Sigmoid colon (tissue), 7 donors: ENCODE measurements at regions of chr6 and their contacts with region 1.

Region 1: DNA sequence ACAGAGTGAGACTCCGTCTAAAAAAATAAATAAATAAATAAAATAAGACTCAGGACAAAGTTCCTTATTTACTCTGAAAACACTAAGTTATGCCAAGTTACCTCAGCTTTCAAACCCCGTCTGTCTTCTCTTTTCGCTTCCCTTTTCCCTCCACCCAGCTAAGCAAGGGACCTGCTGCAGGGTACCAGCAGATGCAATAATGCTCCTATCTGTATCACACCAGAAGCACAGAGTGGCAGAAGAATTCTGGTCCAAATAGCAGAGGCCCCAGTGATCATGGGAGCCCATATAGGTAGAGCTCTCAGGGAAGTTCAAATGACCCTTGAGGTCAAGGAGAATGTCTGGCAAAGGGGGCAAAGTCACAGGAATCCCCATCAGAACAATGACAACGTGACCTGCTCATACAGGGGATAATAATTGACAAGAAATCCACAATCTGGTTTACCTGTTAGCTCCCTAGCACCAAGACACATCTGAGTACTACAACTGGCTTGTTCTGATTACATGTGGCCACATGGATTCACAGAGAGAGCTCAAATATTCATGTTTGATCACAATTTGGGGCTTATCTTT is 8.7 kb downstream of the GCM1 start:
- DNase-seq: no peak
- H3K4me3 ChIP-seq: no peak overlapping the region
- H3K27ac ChIP-seq: peak overlapping the region; percentile 77 to 79 (median 78)
- H3K4me1 ChIP-seq: peaks cover 0 to 53% (median 37%) of the 10 kb centered on the region in 4 donors
- H3K27me3 ChIP-seq: no peaks in the 10 kb centered on the region
- CTCF ChIP-seq: no peak
- EP300 ChIP-seq: no peak
- POLR2A ChIP-seq: no peak

Region 2: GRCh38 chr6:53064726-53065215 is 75.2 kb before region 1 on chr6:
- intact Hi-C with region 1: loop called (anchors 5 kb)
- DNase-seq: peak; percentile 98
- H3K4me3 ChIP-seq: peak overlapping the region; percentile 75 to 92 (median 84)
- H3K27ac ChIP-seq: peak overlapping the region; percentile 95 to 97 (median 96)
- H3K4me1 ChIP-seq: peaks cover 0 to 49% (median 41%) of the 10 kb centered on the region in 4 donors
- H3K27me3 ChIP-seq: no peaks in the 10 kb centered on the region
- CTCF ChIP-seq: no peak
- EP300 ChIP-seq: peak in 1 of 4 donors; percentile 50
- POLR2A ChIP-seq: no peak

Region 3: DNA sequence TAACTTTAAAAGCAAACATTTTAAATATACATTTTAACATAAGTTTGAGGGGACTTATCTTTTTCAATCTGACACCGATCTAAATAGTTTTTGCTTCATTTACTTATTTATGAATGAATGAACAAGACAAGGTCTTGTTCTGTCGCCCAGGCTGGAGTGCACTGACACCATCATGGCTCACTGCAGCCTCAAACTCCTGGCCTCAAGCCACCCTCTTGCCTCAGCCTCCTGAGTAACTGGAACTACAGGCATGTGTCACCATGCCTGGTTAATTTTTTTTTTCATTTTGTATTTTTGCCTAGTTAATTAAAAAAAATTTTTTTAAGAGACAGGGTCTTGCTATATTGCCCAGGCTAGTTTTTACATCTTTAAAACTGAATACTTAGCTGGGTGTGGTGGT is 49.4 kb before region 1 on chr6:
- intact Hi-C with region 1: no loop called
- DNase-seq: no peak
- H3K4me3 ChIP-seq: no peak overlapping the region
- H3K27ac ChIP-seq: no peak overlapping the region
- H3K4me1 ChIP-seq: no peaks in the 10 kb centered on the region
- H3K27me3 ChIP-seq: no peaks in the 10 kb centered on the region
- CTCF ChIP-seq: no peak
- EP300 ChIP-seq: no peak
- POLR2A ChIP-seq: no peak

Region 4: DNA sequence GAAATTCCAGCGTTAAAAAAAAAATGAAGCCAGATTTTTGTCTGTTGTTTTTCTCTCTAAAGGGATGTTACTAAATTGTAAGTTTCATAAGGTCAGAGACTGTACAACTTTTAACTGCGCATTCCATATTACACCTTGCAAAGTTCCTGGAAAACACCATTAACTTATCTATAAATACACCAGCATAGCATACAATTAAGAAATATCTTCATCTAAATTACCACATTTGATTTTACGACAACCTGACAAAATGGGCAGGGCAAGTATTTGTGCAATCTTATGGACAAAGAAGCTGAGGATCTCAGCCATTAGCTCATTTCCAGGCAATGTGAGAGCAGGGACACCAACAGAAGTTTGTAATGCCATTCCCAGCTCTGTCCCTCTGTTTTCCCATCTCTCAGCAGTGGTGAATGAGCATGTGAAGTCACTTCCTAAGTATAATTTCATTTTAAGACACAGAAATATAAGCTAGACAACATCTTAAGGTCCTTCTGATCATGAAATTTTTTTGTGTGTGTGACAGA is 21.6 kb after region 1 on chr6:
- intact Hi-C with region 1: loop called (anchors 2 kb)
- DNase-seq: no peak
- H3K4me3 ChIP-seq: no peak overlapping the region
- H3K27ac ChIP-seq: peak overlapping the region in 3 of 4 donors; percentile 5 to 64 (median 53)
- H3K4me1 ChIP-seq: peaks cover 0 to 32% (median 17%) of the 10 kb centered on the region in 4 donors
- H3K27me3 ChIP-seq: no peaks in the 10 kb centered on the region
- CTCF ChIP-seq: no peak
- EP300 ChIP-seq: no peak
- POLR2A ChIP-seq: no peak